ENCODE measurements at regions of chr10 and their contacts with region 1.

Region 1: GRCh38 chr10:73167783-73168464 is at the starts of genes ECD and FAM149B1:
- DNase-seq: peak; percentile 95
- total RNA-seq, gene ECD: 17.0 TPM
- total RNA-seq, gene FAM149B1: 11.5 TPM

Region 2: DNA sequence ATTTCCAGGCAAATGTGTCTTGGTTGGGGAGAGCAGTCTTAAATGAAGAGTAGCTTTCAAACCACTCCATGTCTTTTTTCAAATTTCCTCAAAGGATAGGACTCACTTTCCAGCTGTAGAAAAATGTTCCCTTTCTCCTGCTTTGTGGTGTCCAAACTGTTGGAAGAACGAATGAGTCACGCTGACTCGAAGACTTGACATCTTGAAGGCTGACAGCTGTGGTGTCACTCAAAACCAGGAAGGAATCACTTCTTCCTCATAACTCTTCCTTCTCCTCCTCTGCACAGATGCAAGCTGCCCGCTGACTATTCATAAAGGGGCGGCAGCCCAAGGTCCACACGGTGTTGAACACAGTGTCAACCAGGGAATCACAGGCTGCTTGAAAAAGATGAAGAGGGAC is 232.6 kb before region 1 on chr10:
- intact Hi-C with region 1: no loop called
- DNase-seq: no peak

Region 3: DNA sequence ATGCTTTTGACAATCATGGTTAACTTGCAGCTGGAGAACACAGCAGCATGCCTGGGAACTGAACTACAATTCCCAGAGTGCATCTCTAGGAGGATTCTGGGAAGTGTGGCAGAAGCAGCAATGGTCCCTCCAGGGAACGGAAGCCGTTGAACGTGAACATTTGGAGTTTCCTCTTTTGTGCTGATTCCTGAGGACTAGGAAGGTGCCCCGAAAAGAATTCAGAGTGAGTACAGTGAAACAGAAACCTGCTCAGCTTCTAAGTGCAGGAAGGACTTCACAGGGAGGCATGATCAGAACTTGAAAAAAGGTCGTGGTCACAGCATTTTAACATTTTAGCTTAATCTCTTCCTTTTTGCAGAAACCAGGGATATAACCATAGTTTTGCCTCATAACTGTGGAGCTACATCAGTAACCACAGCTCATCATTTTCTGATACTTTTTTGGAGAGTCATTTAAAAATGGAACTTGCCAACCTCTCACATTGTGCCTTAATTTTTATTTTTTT is 57.5 kb before region 1 on chr10 and contains the start of gene NUDT13:
- intact Hi-C with region 1: loop called (anchors 5 kb)
- DNase-seq: peak; percentile 88
- total RNA-seq, gene NUDT13: 2.4 TPM

Region 4: GRCh38 chr10:73218431-73219191 is 50.7 kb after region 1 on chr10:
- intact Hi-C with region 1: no loop called
- DNase-seq: no peak

Region 5: GRCh38 chr10:73246783-73247508 is 79.0 kb after region 1 on chr10 and contains the start of gene DNAJC9:
- intact Hi-C with region 1: loop called (anchors 5 kb)
- DNase-seq: peak; percentile 97
- total RNA-seq, gene DNAJC9: 7.4 TPM

Measured in cardiac septum (tissue), 1 donor.